Posterior cingulate gyrus (tissue), 11 donors: ENCODE measurements at regions of chr14 and their contacts with region 1.

Region 1: GRCh38 chr14:90903101-90903500 is 86.9 kb upstream of the TTC7B start:
- DNase-seq: peak in 6 of 10 donors; percentile 49 to 82 (median 61)

Region 2: DNA sequence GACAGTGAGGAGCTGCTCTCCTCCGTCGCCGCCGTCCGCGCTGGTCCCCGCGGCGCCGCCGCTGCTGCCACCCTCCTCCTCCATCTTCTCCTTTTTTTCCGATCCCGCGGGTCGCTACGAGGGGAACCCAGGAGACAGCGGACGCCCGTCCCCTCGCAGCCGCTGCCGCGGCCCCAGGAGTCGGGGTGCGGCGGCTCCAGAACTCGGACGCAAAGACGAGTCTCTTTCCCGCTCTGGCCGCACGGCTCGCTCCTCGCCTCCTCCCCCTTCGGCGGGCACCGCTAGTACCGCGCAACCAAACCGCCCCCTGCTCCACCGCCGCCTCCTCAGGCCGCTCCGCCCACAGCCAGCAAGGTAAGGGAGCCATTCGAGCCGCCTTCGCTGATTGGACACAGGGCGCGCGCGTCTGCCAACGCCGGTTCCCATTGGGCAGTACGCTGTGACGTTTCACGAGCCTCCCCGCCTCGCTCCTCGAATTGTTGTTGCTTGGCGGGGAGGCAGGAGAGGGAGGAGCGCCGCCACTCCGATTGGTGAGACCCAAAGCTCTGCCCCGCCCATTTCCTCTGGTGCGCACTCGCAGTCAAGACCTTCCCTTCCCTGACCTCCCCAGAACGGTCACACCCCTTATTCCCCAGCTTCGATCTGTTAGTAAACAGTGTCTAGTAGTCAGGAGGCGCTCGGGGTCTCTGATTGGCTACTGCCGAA is 157.4 kb after region 1 on chr14 and contains the start of gene RPS6KA5:
- intact Hi-C with region 1: loop called (anchors 5 kb)
- DNase-seq: peak; percentile 100

Region 3: DNA sequence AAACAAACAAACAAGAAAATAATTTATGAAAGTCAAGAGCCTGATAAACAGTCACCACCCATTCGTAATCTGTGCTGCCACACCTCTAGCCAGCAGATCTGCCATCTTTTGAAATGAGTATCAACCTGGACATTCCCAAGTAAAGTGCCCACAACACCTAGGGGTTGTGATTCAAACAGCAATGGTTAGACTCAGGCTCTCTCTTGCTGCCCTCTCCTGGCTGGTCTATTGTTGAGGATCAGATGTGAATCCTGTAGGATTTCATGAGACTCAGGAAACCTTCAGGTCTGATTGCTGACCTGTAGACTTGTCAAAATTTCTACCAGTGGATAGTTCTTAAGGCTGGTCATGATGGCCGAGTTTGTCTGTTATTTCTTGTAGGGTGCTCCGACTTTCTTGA is 237.6 kb after region 1 on chr14:
- intact Hi-C with region 1: loop called (anchors 10 kb)
- DNase-seq: peak in 5 of 10 donors; percentile 39 to 62 (median 47)

Region 4: GRCh38 chr14:91177073-91178034 is 274.3 kb after region 1 on chr14:
- intact Hi-C with region 1: loop called (anchors 2 kb)
- DNase-seq: peak in 7 of 10 donors; percentile 24 to 83 (median 41)

Region 5: DNA sequence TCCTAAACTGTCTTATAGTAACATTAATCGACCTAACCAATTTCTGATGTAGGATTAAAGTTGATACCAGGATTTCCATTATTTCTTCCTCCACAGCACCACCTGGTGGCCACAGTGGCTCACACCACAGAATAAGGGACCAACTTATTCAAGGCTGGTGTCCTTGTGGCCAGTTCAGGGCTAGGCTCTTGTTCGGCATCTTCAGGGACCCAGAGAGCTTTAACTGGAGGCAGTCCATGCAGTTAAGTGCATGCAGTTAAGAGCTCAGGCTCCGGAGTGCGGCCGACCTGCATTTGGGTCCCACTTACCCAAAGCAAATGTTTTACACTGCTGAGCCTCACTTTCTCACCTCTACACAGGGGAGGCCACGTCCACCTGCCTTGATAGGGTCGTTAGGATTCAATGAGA is 383.4 kb after region 1 on chr14:
- intact Hi-C with region 1: loop called (anchors 2 kb)
- DNase-seq: peak; percentile 29 to 95 (median 81)